ENCODE measurements at regions of chr9 and their contacts with region 1.

Region 1: DNA sequence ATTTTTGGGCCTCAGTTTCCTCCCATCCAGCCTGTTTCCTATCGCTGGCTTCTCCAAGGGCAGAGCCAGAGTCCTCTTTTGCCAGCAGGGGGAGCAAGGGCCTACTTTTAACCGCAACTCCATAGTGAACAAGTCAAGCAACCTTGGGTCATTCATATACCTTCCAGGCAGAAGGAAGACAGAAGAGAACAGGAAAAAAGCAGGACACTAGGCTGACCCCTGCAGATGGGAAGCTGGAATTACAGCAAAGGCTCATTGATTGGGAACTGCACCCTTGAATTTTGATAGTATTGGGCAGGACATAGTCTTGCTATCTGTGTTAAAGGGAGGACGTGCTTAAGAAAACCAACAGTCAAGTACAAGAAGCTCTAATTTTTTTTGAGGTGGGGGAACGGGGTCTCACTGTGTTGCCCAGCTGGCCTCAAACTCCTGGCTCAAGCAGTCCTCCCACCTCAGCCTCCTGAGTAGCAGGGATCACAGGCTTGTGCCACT is 30.1 kb downstream of the QRFP start:
- ATAC-seq: peak; percentile 90 to 97 (median 94)
- H3K4me3 ChIP-seq: no peak overlapping the region
- H3K27ac ChIP-seq: peak overlapping the region in 1 of 2 donors; percentile 8
- H3K4me1 ChIP-seq: peaks cover 0 to 3% of the 10 kb centered on the region in 2 donors

Region 2: DNA sequence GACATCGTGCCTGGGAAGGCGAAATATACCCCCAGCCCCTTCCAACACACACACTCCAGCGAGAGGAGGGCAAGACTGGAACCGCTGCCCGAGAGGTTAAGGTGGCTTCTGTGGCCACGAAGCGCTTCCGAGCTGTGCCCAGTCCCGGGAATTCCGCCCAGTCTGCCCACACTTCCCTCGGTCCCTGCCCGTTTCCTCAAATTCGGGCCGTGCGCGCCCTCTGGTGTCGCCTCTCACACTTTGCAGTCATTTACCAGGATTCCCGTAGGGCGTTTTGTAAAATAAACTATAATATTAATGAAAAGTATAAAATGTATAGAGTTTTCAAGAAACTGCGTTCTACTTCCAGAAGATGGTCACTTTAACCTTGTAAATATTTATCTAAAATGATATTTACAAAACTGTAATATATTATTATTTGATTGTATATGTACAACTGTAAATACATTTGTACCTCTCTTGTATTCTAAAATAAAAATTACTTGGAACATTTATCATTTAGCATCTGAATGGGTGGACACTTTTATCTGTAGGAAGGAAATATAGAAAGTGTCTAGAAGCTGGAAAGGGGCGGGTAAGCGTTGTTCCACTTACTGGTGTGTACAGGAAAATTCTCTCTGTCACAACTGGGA is 183.9 kb before region 1 on chr9:
- in situ Hi-C with region 1: no loop called
- ATAC-seq: peak; percentile 18 to 54 (median 34)
- H3K4me3 ChIP-seq: peak overlapping the region in 3 of 5 donors; percentile 47 to 57 (median 52)
- H3K27ac ChIP-seq: no peak overlapping the region
- H3K4me1 ChIP-seq: peaks cover 0 to 4% of the 10 kb centered on the region in 2 donors

Region 3: DNA sequence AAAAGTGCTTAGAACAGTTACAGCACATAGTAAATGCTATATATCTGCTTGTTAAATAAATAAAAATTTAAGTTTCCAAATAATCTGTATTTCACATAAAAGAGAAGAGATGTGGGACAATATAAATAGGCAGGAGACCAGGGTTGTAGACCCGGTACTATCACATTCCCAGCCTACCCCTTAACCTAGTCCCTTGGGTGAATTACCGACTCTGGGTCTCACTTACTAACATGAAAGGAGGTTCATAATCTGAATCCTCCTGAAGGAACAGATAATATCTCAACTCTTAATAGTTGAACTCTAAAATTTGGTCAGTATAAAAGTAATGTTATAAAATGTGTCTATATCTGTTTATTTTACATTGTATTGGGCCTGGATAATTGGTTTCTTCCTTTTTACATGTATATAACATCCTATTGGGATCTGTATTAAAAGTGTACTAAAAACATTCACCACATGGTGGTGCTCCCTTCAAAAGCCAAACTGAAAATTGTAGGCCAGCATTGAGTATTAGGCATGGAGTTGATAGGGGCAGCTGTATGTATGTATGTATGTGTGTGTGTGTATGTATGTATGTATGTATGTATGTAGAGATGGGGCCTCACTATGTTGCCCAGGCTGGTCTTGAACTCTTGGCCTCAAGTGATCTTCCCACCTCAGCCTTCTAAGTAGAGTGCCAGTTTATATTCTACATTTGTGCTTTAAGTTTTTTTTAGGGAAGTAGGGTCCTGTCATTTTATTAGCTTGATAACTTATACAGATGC is 95.7 kb before region 1 on chr9:
- in situ Hi-C with region 1: loop called in 2 of 9 experiments (anchors 10 to 25 kb)
- ATAC-seq: peak; percentile 52 to 94 (median 68)
- H3K4me3 ChIP-seq: no peak overlapping the region
- H3K27ac ChIP-seq: no peak overlapping the region
- H3K4me1 ChIP-seq: peaks cover 13 to 21% of the 10 kb centered on the region in 2 donors

Region 4: DNA sequence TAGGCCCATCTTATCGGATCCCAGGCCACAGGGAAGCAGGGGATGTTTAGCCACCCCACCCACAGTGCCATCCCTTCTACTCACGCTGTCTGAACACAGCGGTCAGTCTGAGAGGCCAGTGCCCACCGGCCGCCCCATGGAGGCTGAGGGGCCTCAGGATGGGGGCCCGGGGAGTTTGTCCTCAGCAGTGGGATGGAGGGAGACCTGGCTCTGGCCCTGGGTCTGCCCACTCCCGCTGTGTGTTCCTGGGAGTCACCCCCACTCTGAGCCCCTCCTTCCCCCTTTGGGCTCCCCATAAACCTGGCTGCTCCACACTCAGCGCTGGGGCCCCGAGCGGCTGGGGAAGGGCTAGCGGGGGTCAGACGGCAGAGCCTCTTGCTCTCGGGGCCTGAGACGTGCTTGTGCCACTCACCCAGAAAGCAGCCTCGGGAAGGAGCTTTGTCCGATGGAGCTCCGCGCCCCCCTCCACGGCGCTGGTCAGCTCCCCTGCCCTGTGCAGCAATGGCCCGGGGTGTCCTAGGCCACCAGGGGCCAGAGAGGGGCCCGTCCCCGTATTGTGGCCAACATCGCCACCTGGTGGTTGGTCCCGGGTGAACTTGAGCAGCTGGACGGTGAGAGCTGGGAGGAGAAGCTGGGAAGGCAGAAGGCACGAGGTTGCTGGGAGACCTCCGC is 131.5 kb after region 1 on chr9:
- in situ Hi-C with region 1: loop called in 1 of 9 experiments (anchors 25 kb)
- ATAC-seq: peak; percentile 80 to 95 (median 91)
- H3K4me3 ChIP-seq: no peak overlapping the region
- H3K27ac ChIP-seq: peak overlapping the region in 1 of 2 donors; percentile 5
- H3K4me1 ChIP-seq: peaks cover 4 to 11% of the 10 kb centered on the region in 2 donors

Region 5: GRCh38 chr9:131046581-131047202 is 180.2 kb after region 1 on chr9:
- in situ Hi-C with region 1: loop called in 3 of 9 experiments (anchors 10 to 25 kb)
- ATAC-seq: peak; percentile 84 to 99 (median 92)
- H3K4me3 ChIP-seq: no peak overlapping the region
- H3K27ac ChIP-seq: peak overlapping the region in 1 of 2 donors; percentile 38
- H3K4me1 ChIP-seq: no peaks in the 10 kb centered on the region

Region 6: GRCh38 chr9:131310833-131311554 is 444.5 kb after region 1 on chr9:
- in situ Hi-C with region 1: no loop called
- ATAC-seq: no peak
- H3K4me3 ChIP-seq: no peak overlapping the region
- H3K27ac ChIP-seq: no peak overlapping the region
- H3K4me1 ChIP-seq: no peaks in the 10 kb centered on the region